Mammary epithelial cell (primary cell): ENCODE measurements at regions of chr15 and their contacts with region 1.

Region 1: DNA sequence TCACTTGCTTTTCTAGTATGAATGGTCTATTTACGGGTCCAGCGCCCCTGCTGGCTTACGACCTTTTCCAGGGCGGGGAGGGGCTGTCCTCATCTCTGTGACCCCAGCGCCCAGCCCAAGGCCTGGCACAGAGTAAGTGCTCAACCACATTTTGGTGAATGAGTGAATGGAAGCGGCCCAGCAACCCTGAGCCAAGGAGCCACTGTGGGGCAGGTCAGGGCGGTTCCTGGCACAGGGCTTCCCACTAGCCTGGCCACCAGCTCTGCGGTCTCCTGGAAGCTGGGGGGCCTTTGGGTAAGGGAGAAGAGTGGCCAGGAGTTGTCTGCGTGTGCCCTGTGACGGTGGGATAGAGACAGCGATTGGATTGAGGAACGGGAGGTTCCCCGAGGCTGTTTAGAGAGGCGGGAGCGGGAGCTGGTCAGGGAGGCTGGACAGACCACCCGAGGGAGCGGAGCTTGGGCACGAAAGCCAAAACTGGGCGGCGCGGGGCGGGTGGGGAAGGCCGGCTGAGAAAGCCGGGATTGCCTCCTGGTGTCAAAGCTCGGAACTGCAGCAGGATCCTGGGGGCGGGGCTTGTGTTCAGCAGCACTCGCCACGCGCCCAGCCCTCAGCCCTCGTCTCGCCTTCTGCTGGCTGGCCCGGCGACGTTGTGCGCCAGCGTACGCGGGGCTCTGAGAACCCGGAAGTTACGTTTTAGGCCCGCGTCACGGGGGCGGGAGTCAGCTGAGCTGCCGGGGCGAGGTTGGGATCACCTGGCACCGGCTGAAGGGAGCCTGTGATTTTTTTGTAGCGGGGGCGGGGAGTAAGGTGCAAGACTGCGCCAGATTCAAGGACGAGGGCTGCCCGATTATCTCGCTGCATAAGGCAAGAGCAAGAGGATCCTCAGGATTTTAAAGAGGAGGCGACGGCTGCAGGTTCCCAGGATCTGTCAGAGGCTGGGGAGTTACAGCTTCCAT is at the start of gene VPS18:
- DNase-seq: peak; percentile 97
- H3K4me3 ChIP-seq: peak within 1 kb of the TSS; percentile 79 to 90 (median 88)
- H3K27ac ChIP-seq: peak within 1 kb of the TSS; percentile 91
- H3K4me1 ChIP-seq: peaks cover 18% of the 10 kb centered on the region
- H3K27me3 ChIP-seq: no peaks in the 10 kb centered on the region
- CTCF ChIP-seq: peak; percentile 78 to 88
- total RNA-seq, gene VPS18: 21.5 to 56.0 TPM

Region 2: GRCh38 chr15:40564591-40565332 is 329.2 kb before region 1 on chr15 and contains the start of gene CCDC32:
- CTCF ChIA-PET with region 1: interaction called, 12 read pairs
- dilution Hi-C with region 1: no loop called
- in situ Hi-C with region 1: no loop called
- intact Hi-C with region 1: no loop called
- DNase-seq: peak; percentile 99
- H3K4me3 ChIP-seq: peak within 1 kb of the TSS; percentile 72 to 91 (median 85)
- H3K27ac ChIP-seq: peak within 1 kb of the TSS; percentile 81
- H3K4me1 ChIP-seq: peaks cover 13% of the 10 kb centered on the region
- H3K27me3 ChIP-seq: no peaks in the 10 kb centered on the region
- CTCF ChIP-seq: no peak
- total RNA-seq, gene CCDC32: 17.3 to 25.8 TPM

Region 3: GRCh38 chr15:40684381-40684780 is 209.6 kb before region 1 on chr15:
- CTCF ChIA-PET with region 1: no interaction called
- dilution Hi-C with region 1: no loop called
- in situ Hi-C with region 1: no loop called
- intact Hi-C with region 1: loop called (anchors 1 kb)
- DNase-seq: peak; percentile 32
- H3K4me3 ChIP-seq: no peak overlapping the region
- H3K27ac ChIP-seq: no peak overlapping the region
- H3K4me1 ChIP-seq: peaks cover 8% of the 10 kb centered on the region
- H3K27me3 ChIP-seq: no peaks in the 10 kb centered on the region
- CTCF ChIP-seq: no peak

Region 4: DNA sequence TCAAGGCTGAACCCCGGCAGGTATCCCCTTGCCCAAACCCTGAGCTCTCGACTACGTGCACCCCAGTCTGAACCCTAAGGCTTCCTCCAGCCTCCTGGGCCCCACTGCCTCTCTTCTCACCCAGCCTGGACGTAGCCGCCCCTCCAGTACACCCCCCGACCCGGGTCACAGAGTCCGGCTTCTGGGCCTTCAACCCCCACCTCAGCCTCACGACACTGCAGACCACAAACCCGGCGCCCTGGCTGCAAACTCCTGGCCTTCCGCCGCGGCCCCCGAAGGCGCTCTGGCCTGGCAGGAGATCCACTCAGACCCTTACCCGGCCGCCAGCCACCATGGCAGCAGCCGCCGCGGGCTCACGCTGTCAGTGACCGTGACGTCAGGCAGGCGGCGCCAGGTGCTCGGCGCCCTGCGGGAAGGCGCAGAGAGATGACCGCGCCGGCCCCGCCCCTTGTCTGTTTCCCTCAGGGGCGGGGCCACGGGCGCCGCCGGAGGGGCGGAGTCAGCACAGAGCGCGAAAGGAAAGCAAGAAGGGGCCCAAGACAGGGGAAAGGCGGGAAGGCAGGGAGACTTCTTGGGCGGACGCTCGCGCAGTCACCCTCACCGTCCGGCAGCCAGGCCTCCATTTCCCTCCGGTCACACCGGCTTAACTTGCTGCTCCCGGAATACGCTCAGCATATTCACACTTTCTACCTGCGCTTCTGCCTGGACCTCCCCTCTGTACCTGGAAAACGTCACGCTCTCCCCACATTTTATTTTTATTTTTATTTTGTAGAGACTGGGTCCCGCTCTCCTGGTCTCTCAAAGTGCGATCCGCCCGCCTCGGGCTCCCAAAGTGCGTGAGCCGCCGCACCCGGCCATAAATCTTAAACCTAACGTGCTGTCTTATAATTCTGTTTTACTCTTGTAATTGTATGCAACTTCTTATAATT is 138.9 kb before region 1 on chr15 and contains the start of gene RMDN3:
- CTCF ChIA-PET with region 1: interaction called, 3 read pairs
- dilution Hi-C with region 1: no loop called
- in situ Hi-C with region 1: no loop called
- intact Hi-C with region 1: loop called (anchors 2 kb)
- DNase-seq: peak; percentile 88
- H3K4me3 ChIP-seq: peak within 1 kb of the TSS; percentile 88 to 97 (median 96)
- H3K27ac ChIP-seq: peak within 1 kb of the TSS; percentile 88
- H3K4me1 ChIP-seq: peaks cover 16% of the 10 kb centered on the region
- H3K27me3 ChIP-seq: no peaks in the 10 kb centered on the region
- CTCF ChIP-seq: no peak
- total RNA-seq, gene RMDN3: 18.2 to 34.5 TPM

Region 5: DNA sequence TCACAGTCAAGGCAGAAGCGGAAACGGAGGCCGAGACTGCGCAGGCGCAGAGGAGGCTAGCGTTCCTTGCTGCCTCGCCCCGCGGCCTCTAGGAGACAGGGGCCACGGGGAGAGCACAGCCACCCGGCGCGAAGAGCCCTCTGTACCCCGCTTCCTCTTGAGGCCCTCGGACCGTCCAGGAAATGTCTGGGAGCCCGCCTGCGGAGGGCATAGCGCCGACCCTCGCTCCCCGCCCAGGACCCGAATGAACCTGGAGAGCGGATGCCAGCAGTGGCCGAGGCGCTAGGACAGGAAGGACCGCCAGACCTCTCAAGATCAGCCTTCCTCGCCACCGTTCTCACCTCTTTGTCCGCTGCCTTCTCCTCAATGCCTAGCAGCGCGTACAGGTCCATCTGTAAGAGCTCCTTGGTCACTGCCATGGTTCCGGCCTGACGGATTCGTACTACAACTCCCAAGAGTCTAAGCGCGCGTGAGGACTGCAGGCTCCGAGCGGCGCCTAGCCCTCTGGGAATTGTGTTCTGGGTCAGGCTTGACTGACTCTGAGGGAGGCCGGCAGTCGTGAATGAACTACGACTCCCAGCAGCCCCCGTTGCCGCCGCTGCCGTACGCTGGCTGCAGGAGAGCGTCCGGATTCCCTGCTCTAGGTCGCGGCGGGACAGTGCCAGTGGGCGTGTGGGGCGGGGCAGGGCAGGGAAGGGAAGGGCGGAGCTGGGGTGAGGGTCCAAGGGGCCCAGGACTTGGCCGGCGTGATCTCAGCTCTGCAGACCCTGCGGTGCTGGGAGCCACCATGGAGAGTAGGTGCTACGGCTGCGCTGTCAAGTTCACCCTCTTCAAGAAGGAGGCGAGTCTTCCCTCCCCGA is 86.8 kb before region 1 on chr15 and contains the starts of genes DNAJC17 and ZFYVE19:
- CTCF ChIA-PET with region 1: interaction called, 4 read pairs
- dilution Hi-C with region 1: no loop called
- in situ Hi-C with region 1: no loop called
- intact Hi-C with region 1: loop called (anchors 5 kb)
- DNase-seq: peak; percentile 97
- H3K4me3 ChIP-seq: peak within 1 kb of the TSS; percentile 72 to 92 (median 83)
- H3K27ac ChIP-seq: peak within 1 kb of the TSS; percentile 56
- H3K4me1 ChIP-seq: peaks cover 16% of the 10 kb centered on the region
- H3K27me3 ChIP-seq: no peaks in the 10 kb centered on the region
- CTCF ChIP-seq: peak in 1 of 2 donors; percentile 17
- total RNA-seq, gene DNAJC17: 12.0 to 40.9 TPM
- total RNA-seq, gene ZFYVE19: 20.2 to 21.2 TPM

Region 6: DNA sequence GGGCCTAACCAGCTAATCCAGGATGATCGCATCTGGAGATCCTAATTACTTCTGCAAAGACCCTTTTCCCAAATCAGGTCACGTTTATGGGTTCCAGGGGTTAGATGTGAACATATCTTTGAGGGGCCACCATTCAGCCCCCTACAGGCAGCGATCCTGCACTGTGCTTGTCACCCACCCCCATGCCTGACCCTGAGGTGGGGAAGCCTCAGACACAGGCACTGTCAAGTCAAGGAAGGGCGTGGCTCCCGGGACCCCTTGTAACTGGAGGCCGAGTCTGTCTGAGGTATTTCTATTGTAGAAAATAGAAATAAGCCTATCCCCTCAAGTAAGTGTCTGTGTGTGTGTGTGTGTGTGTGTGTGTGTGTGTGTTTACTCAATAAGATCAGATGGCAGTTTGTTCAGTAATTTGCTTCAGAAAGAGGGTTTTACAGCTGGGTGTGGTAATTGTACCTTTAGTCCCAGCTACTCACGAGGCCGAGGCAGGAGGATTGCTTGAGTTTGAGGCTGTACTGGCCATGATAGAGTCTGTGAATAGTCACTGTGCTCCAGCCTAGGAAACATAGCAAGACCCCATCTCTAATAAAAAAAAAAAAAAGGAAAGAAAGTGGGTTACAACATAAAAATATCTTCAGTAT is 41.6 kb before region 1 on chr15:
- CTCF ChIA-PET with region 1: interaction called, 14 read pairs
- dilution Hi-C with region 1: no loop called
- in situ Hi-C with region 1: loop called (anchors 5 kb)
- intact Hi-C with region 1: no loop called
- DNase-seq: no peak
- H3K4me3 ChIP-seq: no peak overlapping the region
- H3K27ac ChIP-seq: no peak overlapping the region
- H3K4me1 ChIP-seq: peaks cover 5% of the 10 kb centered on the region
- H3K27me3 ChIP-seq: no peaks in the 10 kb centered on the region
- CTCF ChIP-seq: no peak

Region 7: DNA sequence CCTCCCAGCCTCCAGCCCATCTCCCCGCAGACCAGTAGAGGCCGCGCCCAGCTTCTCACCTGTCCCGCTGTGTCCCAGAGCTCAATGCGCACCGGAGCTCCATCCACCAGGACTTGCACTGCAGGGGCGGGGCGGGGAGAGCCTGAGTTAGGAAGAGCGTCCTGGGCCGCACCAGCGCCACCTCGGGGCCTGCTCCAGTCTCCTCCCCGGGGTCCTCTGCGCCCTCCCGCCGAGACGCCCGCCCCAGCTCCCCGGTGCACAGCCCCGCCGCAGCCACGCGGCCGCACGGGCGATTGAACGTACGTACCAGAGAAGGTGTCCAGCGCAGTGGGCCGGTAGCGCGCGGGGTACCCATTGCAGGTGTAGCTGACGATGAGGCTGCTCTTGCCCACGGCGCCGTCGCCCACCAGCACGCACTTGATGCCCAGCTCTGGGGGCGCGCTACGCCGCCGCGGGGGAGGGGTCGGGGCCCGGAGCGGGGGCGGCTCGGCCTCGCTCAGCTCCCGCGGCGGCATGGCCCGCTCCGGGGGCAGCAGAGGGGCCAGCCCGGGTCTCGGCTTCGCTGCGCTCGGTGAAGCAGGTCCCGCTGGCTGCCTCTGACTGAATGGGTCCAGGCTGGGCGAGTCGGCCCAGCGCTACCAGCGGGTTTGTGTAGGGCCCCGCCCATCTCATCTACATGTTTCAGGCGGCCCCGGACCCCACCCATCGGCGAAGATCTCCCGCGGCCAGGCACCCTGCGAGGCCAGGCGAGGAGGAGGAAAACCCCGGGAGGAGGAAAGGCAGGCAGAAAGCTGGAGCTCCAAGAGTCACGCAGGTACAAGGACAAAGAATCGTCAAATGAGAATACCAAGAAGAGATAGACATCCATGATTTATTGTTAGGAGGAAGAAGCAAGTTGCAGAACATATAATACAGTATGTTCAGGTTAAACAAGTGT is 20.1 kb before region 1 on chr15 and contains the start of gene RHOV:
- CTCF ChIA-PET with region 1: interaction called, 10 read pairs
- dilution Hi-C with region 1: no loop called
- in situ Hi-C with region 1: no loop called
- intact Hi-C with region 1: loop called (anchors 2 kb)
- DNase-seq: peak; percentile 80
- H3K4me3 ChIP-seq: peak within 1 kb of the TSS; percentile 39 to 72 (median 61)
- H3K27ac ChIP-seq: no peak within 1 kb of the TSS
- H3K4me1 ChIP-seq: peaks cover 28% of the 10 kb centered on the region
- H3K27me3 ChIP-seq: no peaks in the 10 kb centered on the region
- CTCF ChIP-seq: peak; percentile 10 to 58
- total RNA-seq, gene RHOV: 0.83 to 0.87 TPM